Natural killer cell (primary cell): ENCODE measurements at regions of chr15 and their contacts with region 1.

Region 1: GRCh38 chr15:70097337-70098169 is at the start of gene TLE3:
- DNase-seq: peak; percentile 98 to 99
- ATAC-seq: peak; percentile 57 to 80 (median 70)
- H3K4me3 ChIP-seq: peak within 1 kb of the TSS; percentile 74
- H3K4me3 Mint-ChIP-seq: peak within 1 kb of the TSS; percentile 91
- H3K27ac ChIP-seq: peak within 1 kb of the TSS; percentile 94
- H3K27ac Mint-ChIP-seq: peak within 1 kb of the TSS; percentile 91 to 100
- H3K4me1 ChIP-seq: peaks cover 70% of the 10 kb centered on the region
- H3K4me1 Mint-ChIP-seq: peaks cover 49 to 66% of the 10 kb centered on the region in 2 donors
- H3K27me3 ChIP-seq: peaks cover 26% of the 10 kb centered on the region
- H3K27me3 Mint-ChIP-seq: peaks cover 23 to 38% of the 10 kb centered on the region in 2 donors
- CTCF ChIP-seq: peak; percentile 32
- total RNA-seq, gene TLE3: 32.1 to 94.9 (median 36.7) TPM

Region 2: DNA sequence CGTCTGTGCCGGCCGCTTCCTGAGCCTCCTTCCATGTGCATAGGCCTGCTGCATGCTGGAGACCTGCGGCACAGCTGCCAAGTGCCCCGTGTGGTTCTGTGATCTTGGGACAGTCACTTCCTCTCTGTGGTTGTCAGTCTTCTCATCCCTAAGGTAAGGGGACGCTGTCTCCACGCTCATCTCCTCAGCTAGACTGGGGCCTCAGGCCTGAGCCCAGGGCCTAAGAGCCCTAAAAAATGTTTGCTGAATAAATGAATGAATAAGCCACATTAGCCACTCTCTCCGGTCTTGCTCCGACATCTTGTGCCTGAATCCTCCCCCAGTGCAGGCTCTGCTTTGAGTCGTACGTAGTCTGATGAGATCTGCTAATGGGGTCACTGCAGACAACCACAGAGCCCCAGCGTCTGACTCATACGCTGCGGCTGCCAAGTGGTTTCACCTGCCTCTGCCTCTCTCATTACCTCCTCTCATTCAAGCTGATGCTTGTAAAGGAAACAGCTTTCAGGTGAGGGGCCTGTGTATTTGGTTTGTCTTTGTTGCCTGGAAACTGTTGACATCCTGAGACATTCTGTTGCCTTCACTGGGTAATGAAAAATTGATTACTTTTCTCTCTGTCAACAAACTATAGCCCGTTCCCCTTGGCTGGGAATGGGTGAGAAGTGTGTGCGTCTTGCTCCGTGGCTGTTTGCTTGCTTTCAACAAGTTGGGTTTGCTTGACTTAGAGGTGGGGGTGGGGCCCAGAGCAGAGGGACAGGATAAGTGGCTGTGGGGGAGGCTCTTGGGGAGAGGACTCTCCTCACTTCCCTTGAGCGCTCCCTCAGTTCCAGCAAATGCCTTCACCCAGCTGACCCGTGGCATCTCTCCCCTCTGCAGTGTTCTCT is 629.1 kb before region 1 on chr15:
- intact Hi-C with region 1: loop called (anchors 2 kb)
- DNase-seq: peak; percentile 85 to 95
- ATAC-seq: peak; percentile 82 to 94 (median 92)
- H3K4me3 ChIP-seq: no peak overlapping the region
- H3K4me3 Mint-ChIP-seq: peak overlapping the region; percentile 88
- H3K27ac ChIP-seq: peak overlapping the region; percentile 81
- H3K27ac Mint-ChIP-seq: peak overlapping the region; percentile 89 to 98
- H3K4me1 ChIP-seq: peaks cover 32% of the 10 kb centered on the region
- H3K4me1 Mint-ChIP-seq: peaks cover 20 to 21% of the 10 kb centered on the region in 2 donors
- H3K27me3 ChIP-seq: peaks cover 2% of the 10 kb centered on the region
- H3K27me3 Mint-ChIP-seq: peaks cover 17 to 30% of the 10 kb centered on the region in 2 donors
- CTCF ChIP-seq: no peak

Region 3: GRCh38 chr15:69760890-69761568 is 336.5 kb before region 1 on chr15:
- intact Hi-C with region 1: loop called (anchors 1 kb)
- DNase-seq: peak; percentile 61 to 93
- ATAC-seq: peak; percentile 58 to 78 (median 67)
- H3K4me3 ChIP-seq: no peak overlapping the region
- H3K4me3 Mint-ChIP-seq: peak overlapping the region; percentile 22
- H3K27ac ChIP-seq: peak overlapping the region; percentile 39
- H3K27ac Mint-ChIP-seq: peak overlapping the region; percentile 82 to 84
- H3K4me1 ChIP-seq: peaks cover 55% of the 10 kb centered on the region
- H3K4me1 Mint-ChIP-seq: peaks cover 53 to 66% of the 10 kb centered on the region in 2 donors
- H3K27me3 ChIP-seq: no peaks in the 10 kb centered on the region
- H3K27me3 Mint-ChIP-seq: peaks cover 50 to 74% of the 10 kb centered on the region in 2 donors
- CTCF ChIP-seq: no peak

Region 4: GRCh38 chr15:70140543-70141375 is 43.2 kb after region 1 on chr15:
- intact Hi-C with region 1: loop called (anchors 5 kb)
- DNase-seq: peak in 1 of 2 donors; percentile 77
- ATAC-seq: peak; percentile 55 to 66 (median 64)
- H3K4me3 ChIP-seq: no peak overlapping the region
- H3K4me3 Mint-ChIP-seq: peak overlapping the region; percentile 78
- H3K27ac ChIP-seq: no peak overlapping the region
- H3K27ac Mint-ChIP-seq: peak overlapping the region; percentile 54 to 66
- H3K4me1 ChIP-seq: peaks cover 28% of the 10 kb centered on the region
- H3K4me1 Mint-ChIP-seq: peaks cover 21 to 31% of the 10 kb centered on the region in 2 donors
- H3K27me3 ChIP-seq: peaks cover 8% of the 10 kb centered on the region
- H3K27me3 Mint-ChIP-seq: peaks cover 52 to 78% of the 10 kb centered on the region in 2 donors
- CTCF ChIP-seq: no peak

Region 5: DNA sequence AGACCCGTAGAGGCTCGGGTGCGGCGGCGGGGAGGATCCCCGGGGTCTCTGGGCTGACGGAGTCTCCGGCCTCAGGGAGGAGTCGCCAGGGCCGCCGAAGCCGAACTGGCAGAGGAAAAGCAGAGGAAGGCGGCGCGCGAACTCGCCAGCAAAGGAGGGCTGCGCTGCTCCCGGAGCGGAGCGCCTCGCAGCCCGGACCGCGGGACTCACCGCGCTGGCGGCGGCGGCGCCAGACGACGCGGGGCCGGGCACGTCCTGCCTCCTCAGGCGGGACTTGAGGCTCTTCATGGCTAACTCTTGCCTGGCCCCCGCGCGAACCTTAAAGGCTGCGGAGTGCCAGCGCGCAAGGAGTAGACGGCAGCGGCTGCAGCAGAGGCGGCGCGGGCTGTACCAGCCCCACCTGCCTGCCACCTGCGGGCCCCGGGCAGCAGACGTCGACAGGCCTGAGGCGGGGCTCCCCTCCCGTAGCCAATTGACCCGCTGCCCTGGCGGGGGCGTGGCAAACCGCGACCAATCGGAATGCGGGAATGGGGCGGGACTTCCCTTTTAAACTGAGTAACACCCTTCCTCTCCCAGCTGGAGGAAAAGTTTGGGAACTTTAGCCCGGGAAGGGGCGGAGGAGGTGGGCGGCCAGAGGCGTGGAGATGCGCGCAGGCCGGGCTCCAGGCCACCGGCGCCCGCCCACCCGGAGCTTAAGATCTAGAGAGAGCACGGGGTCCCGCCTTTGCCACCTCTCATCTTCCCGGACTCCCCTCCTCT is 665.7 kb after region 1 on chr15 and contains the start of gene UACA:
- intact Hi-C with region 1: loop called (anchors 10 kb)
- DNase-seq: peak; percentile 72 to 74
- ATAC-seq: peak; percentile 93 to 98 (median 97)
- H3K4me3 ChIP-seq: peak within 1 kb of the TSS; percentile 54
- H3K4me3 Mint-ChIP-seq: peak within 1 kb of the TSS; percentile 92
- H3K27ac ChIP-seq: no peak within 1 kb of the TSS
- H3K27ac Mint-ChIP-seq: peak within 1 kb of the TSS in 1 of 2 donors; percentile 73
- H3K4me1 ChIP-seq: peaks cover 17% of the 10 kb centered on the region
- H3K4me1 Mint-ChIP-seq: peaks cover 23 to 28% of the 10 kb centered on the region in 2 donors
- H3K27me3 ChIP-seq: peaks cover 30% of the 10 kb centered on the region
- H3K27me3 Mint-ChIP-seq: peaks cover 28 to 42% of the 10 kb centered on the region in 2 donors
- CTCF ChIP-seq: no peak
- total RNA-seq, gene UACA: 1.1 to 3.1 (median 2.1) TPM